Psoas muscle (tissue), 8 donors: ENCODE measurements at regions of chr9 and their contacts with region 1.

Region 1: GRCh38 chr9:23769307-23769935 is 56.6 kb downstream of the ELAVL2 start:
- DNase-seq: no peak
- ATAC-seq: no peak
- H3K4me3 ChIP-seq: no peak overlapping the region
- H3K27ac ChIP-seq: no peak overlapping the region
- H3K4me1 ChIP-seq: peaks cover 4% of the 10 kb centered on the region
- H3K27me3 ChIP-seq: no peaks in the 10 kb centered on the region
- CTCF ChIP-seq: no peak

Region 2: DNA sequence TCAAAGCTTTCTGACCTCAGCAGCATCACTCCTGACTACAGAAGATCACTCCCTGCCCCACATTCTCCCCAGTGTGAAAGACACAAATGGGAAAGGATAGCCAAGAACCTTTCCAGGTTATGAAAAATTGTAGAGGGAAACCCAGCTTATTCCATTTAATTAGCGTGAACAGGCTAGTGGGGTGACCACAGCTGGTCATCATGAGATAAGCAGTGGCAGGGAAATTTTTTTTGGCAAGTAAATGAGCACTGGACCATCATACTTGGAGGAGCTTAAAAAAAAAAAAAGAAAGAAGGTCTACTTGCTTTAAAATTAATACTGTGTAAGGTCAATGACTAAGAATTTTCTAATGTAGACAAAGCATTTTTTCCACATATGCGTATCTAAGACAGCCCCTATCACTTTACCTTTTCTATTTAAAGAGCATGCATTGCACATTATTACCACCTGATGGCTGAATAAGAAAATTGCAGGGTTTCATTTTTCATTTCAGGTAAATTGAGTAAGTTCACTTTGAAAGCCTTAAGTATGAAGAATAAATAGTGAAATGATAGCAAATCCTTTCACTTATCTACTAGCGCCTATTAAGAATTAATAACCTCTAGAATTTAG is 67.0 kb before region 1 on chr9:
- intact Hi-C with region 1: loop called in 1 of 2 experiments (anchors 10 kb)
- DNase-seq: no peak
- ATAC-seq: no peak
- H3K4me3 ChIP-seq: no peak overlapping the region
- H3K27ac ChIP-seq: no peak overlapping the region
- H3K4me1 ChIP-seq: no peaks in the 10 kb centered on the region
- H3K27me3 ChIP-seq: no peaks in the 10 kb centered on the region
- CTCF ChIP-seq: no peak

Region 3: GRCh38 chr9:24036459-24036858 is 267.0 kb after region 1 on chr9:
- intact Hi-C with region 1: no loop called
- DNase-seq: no peak
- ATAC-seq: no peak
- H3K4me3 ChIP-seq: no peak overlapping the region
- H3K27ac ChIP-seq: no peak overlapping the region
- H3K4me1 ChIP-seq: no peaks in the 10 kb centered on the region
- H3K27me3 ChIP-seq: no peaks in the 10 kb centered on the region
- CTCF ChIP-seq: no peak

Region 4: GRCh38 chr9:24698881-24699518 is 929.6 kb after region 1 on chr9:
- intact Hi-C with region 1: no loop called
- DNase-seq: no peak
- ATAC-seq: no peak
- H3K4me3 ChIP-seq: no peak overlapping the region
- H3K27ac ChIP-seq: no peak overlapping the region
- H3K4me1 ChIP-seq: no peaks in the 10 kb centered on the region
- H3K27me3 ChIP-seq: no peaks in the 10 kb centered on the region
- CTCF ChIP-seq: no peak